Mammary epithelial cell (primary cell): ENCODE measurements at regions of chr18 and their contacts with region 1.

Region 1: GRCh38 chr18:5824370-5824984 is 70.8 kb downstream of the TMEM200C start:
- DNase-seq: no peak
- H3K4me3 ChIP-seq: no peak overlapping the region
- H3K27ac ChIP-seq: no peak overlapping the region
- H3K4me1 ChIP-seq: no peaks in the 10 kb centered on the region
- H3K27me3 ChIP-seq: no peaks in the 10 kb centered on the region
- CTCF ChIP-seq: no peak

Region 2: GRCh38 chr18:5768454-5768853 is 56.0 kb before region 1 on chr18:
- CTCF ChIA-PET with region 1: no interaction called
- dilution Hi-C with region 1: no loop called
- in situ Hi-C with region 1: loop called in 1 of 2 experiments (anchors 10 kb)
- intact Hi-C with region 1: no loop called
- DNase-seq: no peak
- H3K4me3 ChIP-seq: no peak overlapping the region
- H3K27ac ChIP-seq: no peak overlapping the region
- H3K4me1 ChIP-seq: no peaks in the 10 kb centered on the region
- H3K27me3 ChIP-seq: no peaks in the 10 kb centered on the region
- CTCF ChIP-seq: no peak